Ascending aorta (tissue), 2 donors: ENCODE measurements at regions of chr2 and their contacts with region 1.

Region 1: DNA sequence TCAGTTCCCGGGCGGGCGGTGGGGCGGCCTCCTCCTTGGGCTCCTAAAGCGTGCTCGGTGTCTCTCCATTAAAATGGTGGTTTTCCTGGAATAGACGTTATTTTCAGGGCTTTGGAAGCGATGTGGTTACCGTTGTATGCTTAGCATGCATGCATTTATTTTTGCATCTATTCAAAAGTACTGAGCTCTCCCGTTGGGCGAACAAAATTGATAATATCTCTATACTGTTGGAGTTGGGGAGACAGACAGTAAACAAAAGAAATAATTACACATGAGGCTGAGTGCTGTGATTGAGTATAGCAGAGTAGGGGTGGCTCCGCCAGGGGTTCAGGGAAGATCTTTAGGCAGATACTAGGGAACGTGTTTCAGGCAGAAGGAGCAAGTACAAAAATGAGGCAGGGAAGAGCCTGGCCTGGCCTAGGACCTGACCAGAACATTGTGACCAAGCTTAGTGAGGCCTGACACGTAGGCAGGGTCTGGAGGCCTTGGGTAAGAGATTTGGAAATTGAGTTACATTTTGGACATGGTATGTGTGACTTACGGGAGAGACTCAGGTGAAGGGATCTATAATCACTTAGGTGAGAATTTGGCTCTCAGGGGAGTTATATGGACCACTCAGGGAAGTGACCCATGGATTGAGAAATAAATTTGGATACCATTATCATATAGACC is 674 bp downstream of the NCAPH start:
- DNase-seq: no peak
- H3K4me3 ChIP-seq: peak overlapping the region; percentile 73 to 74
- H3K27ac ChIP-seq: no peak overlapping the region
- H3K4me1 ChIP-seq: no peaks in the 10 kb centered on the region
- H3K27me3 ChIP-seq: no peaks in the 10 kb centered on the region
- CTCF ChIP-seq: no peak

Region 2: DNA sequence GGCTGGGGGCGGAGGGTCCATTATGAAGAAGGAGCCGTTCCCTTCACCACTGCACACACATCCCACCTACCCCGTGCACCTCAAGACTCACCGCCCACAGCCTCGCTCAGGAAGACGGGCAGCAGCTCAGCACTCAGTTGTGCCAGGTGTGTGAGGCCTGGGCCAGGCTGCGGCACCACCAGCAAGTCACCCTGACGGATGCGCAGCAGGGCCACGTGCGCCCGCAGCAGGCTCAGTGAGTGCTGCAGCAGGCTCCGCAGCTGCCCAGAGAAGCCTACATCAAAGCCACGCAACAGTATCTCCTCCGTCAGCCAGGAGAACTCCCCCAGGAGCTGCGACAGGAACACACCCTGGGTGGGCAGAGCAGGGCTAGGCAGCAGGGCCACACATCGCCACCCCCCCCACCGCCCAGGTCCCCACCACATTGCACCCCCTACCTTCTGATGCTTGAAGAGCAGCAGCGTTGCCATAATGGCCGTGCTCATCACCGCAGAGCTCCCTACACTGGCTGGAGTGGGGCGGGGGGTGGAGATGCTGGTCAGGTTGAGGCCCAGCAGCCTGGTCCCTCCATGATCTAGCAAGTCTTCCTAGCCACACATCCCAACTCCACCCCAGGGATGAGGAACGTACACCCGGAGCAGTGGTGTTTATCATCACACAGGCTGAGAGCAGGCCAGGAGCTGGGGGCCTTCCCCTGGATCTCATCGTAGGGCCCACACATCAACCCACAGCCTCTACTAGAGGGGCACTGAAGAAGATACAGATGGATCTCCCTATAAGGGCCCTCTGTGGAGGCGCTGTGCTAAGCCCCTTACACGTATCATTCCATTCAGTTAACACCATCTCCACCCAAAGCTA is 311.7 kb before region 1 on chr2:
- intact Hi-C with region 1: no loop called
- DNase-seq: peak in 1 of 2 donors; percentile 58
- H3K4me3 ChIP-seq: no peak overlapping the region
- H3K27ac ChIP-seq: no peak overlapping the region
- H3K4me1 ChIP-seq: no peaks in the 10 kb centered on the region
- H3K27me3 ChIP-seq: no peaks in the 10 kb centered on the region
- CTCF ChIP-seq: no peak

Region 3: GRCh38 chr2:96241900-96242611 is 94.2 kb before region 1 on chr2:
- intact Hi-C with region 1: no loop called
- DNase-seq: peak in 1 of 2 donors; percentile 53
- H3K4me3 ChIP-seq: no peak overlapping the region
- H3K27ac ChIP-seq: peak overlapping the region; percentile 26 to 50
- H3K4me1 ChIP-seq: no peaks in the 10 kb centered on the region
- H3K27me3 ChIP-seq: no peaks in the 10 kb centered on the region
- CTCF ChIP-seq: no peak

Region 4: DNA sequence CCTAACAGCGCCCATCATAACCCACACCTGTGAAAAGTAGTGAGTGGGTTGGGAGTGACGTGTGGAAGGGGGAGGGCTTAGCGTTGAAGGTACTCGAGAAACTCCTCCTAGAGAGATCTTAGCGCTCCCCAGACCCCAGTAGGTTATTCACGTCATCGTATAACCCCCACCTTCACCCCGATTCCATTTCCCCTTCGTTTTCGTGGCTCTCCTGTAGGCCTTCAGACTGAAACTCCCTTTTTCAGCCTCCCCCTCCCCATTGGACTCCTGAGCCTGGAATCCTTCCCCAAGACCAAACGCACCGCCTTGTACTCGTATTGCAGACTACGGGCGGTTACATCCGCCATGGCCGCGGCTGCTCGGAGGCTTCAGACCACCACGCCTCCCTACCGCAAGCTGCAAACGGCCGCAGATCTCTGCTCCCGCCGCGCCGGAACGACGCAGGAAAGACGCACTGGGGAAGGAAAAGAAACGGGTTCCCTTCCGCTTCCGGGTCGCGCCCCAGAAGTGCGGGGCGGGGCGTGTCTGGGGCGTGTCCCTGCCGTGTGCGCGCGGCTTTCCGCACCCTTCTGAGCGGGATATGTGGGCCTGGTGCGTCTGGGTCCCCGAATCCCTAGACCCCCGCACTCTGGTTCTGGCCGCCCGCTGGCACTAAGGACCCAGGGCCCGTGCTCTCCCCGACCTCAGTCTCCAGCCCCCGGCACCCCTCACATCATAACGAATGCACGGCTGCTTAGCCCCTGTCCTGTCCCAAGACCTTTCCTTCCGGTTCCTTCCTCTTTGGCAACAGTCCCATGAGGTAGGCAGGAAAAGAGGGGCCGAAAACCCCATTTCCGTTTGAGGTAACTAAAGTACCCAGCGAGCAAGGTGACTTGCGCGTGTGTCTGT is 30.9 kb before region 1 on chr2 and contains the start of gene SNRNP200:
- intact Hi-C with region 1: loop called (anchors 2 kb)
- DNase-seq: peak; percentile 30 to 91
- H3K4me3 ChIP-seq: peak within 1 kb of the TSS; percentile 84 to 85
- H3K27ac ChIP-seq: peak within 1 kb of the TSS; percentile 73 to 82
- H3K4me1 ChIP-seq: peaks cover 4 to 13% of the 10 kb centered on the region in 2 donors
- H3K27me3 ChIP-seq: no peaks in the 10 kb centered on the region
- CTCF ChIP-seq: no peak
- total RNA-seq, gene SNRNP200: 57.4 TPM

Region 5: DNA sequence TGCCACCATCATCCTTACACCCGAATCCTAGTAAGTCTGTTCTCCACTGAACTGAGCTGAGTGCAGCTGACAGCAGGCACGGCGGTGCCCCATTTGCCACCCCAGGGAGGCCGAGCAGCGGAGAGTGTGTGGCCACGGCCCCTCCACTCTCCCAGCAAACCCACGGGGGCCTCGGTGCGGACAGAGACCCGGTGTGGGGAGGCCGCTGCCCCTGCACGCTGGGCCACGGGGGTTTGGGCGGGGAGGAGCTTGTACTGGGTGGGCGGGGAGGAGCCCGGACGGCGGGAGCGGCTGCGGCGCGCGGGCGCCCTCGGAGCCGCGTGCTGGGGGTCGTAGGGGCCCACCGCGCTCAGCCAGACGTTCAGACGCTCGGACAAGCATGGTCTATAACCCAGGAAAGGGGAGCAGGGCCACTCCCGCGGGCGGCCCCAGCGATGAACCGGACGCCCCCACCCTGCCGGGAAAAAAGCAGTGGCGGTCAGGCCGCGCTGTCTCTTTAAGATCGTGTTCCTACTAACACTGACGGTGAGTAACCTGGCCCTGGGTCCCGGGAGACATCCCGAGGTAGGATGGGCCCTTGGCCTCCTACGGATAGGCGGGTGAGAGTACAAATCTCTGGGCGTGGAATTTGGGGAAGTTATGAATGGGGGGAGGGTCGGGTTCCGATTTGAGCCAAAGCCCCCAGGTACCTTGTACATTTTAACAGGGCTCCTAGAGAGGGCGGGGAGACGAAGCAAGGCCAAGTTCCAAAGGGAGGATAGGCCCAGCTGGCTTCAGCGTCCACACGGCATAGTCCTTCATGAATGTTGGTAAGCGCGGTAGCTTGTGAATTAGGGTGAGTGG is 11.0 kb before region 1 on chr2 and contains the start of gene ITPRIPL1:
- intact Hi-C with region 1: loop called (anchors 2 kb)
- DNase-seq: peak in 1 of 2 donors; percentile 60
- H3K4me3 ChIP-seq: peak within 1 kb of the TSS; percentile 56 to 72
- H3K27ac ChIP-seq: peak within 1 kb of the TSS; percentile 15 to 20
- H3K4me1 ChIP-seq: peaks cover 0 to 10% of the 10 kb centered on the region in 2 donors
- H3K27me3 ChIP-seq: no peaks in the 10 kb centered on the region
- CTCF ChIP-seq: no peak
- total RNA-seq, gene ITPRIPL1: 14.5 TPM

Region 6: DNA sequence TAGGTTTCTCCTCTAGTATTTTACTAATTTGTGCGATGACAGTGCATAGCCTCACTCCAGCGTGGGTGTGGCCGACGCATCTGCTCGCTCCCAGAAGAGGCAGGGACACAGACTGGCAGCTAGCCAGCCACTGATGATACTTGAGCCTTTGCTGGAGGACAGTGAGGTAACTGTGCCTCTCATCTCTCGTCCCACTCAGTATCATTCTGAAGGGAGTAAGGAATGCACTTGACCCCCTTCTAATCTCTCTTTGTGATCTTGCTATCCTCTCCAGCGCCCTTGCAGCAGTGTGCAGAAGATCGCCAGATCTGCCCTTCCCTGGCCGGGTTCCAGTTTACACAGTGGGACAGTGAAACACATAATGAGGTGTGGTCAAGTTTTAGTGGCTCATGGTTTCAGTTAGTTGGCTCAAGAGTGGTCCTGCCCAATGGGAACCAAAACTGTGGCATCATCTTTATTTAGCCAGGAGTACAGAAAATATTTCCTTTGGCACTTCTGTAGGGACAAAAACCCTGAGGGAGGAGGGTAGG is 16.9 kb after region 1 on chr2:
- intact Hi-C with region 1: loop called (anchors 2 kb)
- DNase-seq: peak in 1 of 2 donors; percentile 82
- H3K4me3 ChIP-seq: peak overlapping the region; percentile 4 to 37
- H3K27ac ChIP-seq: peak overlapping the region; percentile 78 to 84
- H3K4me1 ChIP-seq: peaks cover 0 to 19% of the 10 kb centered on the region in 2 donors
- H3K27me3 ChIP-seq: no peaks in the 10 kb centered on the region
- CTCF ChIP-seq: no peak

Region 7: DNA sequence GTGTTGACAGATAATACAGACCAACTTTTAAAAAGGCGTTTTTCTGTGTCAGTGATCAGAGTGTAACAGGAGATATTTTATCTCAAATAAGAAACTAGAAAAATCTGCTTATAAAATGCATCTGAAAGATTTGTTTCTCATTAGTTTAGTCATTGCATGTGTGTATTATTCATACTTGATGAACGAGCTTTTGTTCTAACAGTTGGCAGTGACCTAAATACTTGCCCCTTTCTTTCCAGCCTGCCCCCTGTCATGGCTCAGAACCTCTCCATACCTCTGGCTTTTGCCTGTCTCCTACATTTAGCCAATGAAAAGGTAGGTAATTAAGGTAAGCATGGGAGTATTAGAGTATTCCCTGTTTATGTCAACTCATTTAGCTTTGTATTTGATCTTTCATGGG is 32.9 kb after region 1 on chr2:
- intact Hi-C with region 1: no loop called
- DNase-seq: peak in 1 of 2 donors; percentile 3
- H3K4me3 ChIP-seq: no peak overlapping the region
- H3K27ac ChIP-seq: no peak overlapping the region
- H3K4me1 ChIP-seq: peaks cover 0 to 8% of the 10 kb centered on the region in 2 donors
- H3K27me3 ChIP-seq: no peaks in the 10 kb centered on the region
- CTCF ChIP-seq: no peak